ENCODE measurements at regions of chr3 and their contacts with region 1.

Region 1: GRCh38 chr3:63349583-63350521 is 71.7 kb downstream of the SYNPR start:
- DNase-seq: peak; percentile 43
- CTCF ChIP-seq: peak; percentile 71

Region 2: DNA sequence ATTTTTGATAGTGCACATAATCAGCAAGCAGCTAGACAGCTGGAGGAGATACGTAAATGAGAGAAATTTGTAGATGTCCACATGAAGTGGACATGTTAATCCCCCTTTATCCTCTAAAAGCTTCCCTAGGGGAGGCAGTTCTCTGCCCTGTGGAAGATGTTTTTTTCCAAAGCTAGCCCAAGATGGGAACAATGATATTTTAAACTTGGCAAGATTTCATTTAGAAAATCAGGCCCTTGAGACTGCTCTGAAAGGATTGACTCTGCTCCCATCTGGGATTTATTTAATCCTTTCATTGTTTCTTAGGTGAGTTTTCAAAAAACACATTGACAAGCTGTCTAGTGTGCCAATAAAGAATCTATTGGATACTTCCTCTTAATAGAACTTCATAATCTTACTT is 20.2 kb after region 1 on chr3:
- CTCF ChIA-PET with region 1: interaction called, 30 read pairs
- POLR2A ChIA-PET with region 1: no interaction called
- DNase-seq: no peak
- CTCF ChIP-seq: no peak

Region 3: DNA sequence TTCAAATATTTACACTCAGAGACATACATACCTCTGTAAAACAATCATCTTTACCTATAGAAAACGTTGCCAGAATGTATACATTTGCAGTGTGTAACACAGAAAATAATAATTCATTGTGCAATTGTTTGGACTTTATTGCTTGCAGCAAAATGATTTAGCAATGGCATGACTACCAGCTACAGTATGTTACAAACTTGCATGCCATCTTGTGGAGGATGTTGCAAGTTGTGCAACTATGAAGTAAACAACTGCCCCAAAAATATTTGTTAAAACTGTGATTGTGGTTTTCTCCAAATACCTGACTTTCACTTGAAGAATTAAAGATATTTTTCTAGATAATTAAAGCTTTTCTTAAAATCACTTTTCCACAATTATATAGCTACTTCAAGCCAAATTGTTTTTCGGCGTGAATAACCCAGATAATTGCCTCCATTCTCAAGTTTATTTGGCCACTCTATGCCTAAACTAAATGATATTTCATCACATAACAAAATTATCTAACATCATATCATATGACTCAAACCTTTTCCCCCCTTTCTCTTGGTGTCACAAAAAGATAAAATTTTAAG is 442.2 kb after region 1 on chr3:
- CTCF ChIA-PET with region 1: no interaction called
- POLR2A ChIA-PET with region 1: no interaction called
- DNase-seq: no peak
- CTCF ChIP-seq: no peak

Region 4: GRCh38 chr3:63824309-63824708 is 474.5 kb after region 1 on chr3:
- CTCF ChIA-PET with region 1: interaction called, 194 read pairs
- POLR2A ChIA-PET with region 1: no interaction called
- DNase-seq: no peak
- CTCF ChIP-seq: no peak

Region 5: GRCh38 chr3:63993653-63994079 is 643.8 kb after region 1 on chr3:
- CTCF ChIA-PET with region 1: interaction called, 16 read pairs
- POLR2A ChIA-PET with region 1: no interaction called
- DNase-seq: peak; percentile 70
- CTCF ChIP-seq: peak; percentile 89

Measured in GM10248 (cell line).